ENCODE measurements at regions of chr22 and their contacts with region 1.

Region 1: DNA sequence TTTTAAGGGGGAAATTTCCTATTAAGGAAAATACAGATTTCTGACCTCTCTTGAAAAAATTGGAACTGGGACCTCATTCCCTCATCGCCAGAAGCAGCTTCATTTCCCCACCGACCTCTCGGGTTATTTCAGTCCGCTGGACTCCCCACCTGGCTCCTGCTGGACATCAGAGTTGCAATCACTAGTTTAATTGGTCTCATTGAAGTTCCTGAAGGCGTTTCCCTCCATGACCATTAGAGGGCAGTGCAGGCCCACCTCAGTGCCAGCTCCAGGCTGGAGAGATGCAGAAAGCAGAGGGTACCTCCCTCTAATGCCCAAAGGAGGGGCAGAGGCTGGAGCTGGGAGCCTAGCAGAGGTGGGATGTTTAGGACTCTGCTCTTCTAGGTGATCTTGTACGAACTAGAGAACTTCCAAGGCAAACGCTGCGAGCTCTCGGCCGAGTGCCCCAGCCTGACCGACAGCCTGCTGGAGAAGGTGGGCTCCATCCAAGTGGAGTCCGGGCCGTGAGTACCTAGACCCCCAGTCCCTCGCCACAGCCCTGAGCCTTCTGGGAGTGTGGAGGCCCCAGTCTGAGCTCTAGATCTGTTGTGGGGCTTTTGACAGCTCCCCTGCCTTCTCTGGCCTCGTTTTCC is 2.7 kb downstream of the CRYBB3 start:
- DNase-seq: peak in 4 of 5 donors; percentile 28 to 39 (median 36)
- H3K4me3 ChIP-seq: no peak overlapping the region
- H3K4me3 Mint-ChIP-seq: no peak overlapping the region
- H3K27ac ChIP-seq: no peak overlapping the region
- H3K27ac Mint-ChIP-seq: no peak overlapping the region
- H3K4me1 ChIP-seq: no peaks in the 10 kb centered on the region
- H3K4me1 Mint-ChIP-seq: peaks cover 0 to 3% (median under 1%) of the 10 kb centered on the region in 4 donors
- H3K27me3 ChIP-seq: no peaks in the 10 kb centered on the region
- H3K27me3 Mint-ChIP-seq: no peaks in the 10 kb centered on the region

Region 2: GRCh38 chr22:25027959-25028840 is 174.2 kb before region 1 on chr22:
- CTCF ChIA-PET with region 1: no interaction called
- POLR2A ChIA-PET with region 1: no interaction called
- intact Hi-C with region 1: no loop called
- DNase-seq: no peak
- H3K4me3 ChIP-seq: no peak overlapping the region
- H3K4me3 Mint-ChIP-seq: no peak overlapping the region
- H3K27ac ChIP-seq: no peak overlapping the region
- H3K27ac Mint-ChIP-seq: no peak overlapping the region
- H3K4me1 ChIP-seq: peaks cover 5% of the 10 kb centered on the region
- H3K4me1 Mint-ChIP-seq: peaks cover 7 to 22% (median 9%) of the 10 kb centered on the region in 4 donors
- H3K27me3 ChIP-seq: no peaks in the 10 kb centered on the region
- H3K27me3 Mint-ChIP-seq: no peaks in the 10 kb centered on the region

Region 3: DNA sequence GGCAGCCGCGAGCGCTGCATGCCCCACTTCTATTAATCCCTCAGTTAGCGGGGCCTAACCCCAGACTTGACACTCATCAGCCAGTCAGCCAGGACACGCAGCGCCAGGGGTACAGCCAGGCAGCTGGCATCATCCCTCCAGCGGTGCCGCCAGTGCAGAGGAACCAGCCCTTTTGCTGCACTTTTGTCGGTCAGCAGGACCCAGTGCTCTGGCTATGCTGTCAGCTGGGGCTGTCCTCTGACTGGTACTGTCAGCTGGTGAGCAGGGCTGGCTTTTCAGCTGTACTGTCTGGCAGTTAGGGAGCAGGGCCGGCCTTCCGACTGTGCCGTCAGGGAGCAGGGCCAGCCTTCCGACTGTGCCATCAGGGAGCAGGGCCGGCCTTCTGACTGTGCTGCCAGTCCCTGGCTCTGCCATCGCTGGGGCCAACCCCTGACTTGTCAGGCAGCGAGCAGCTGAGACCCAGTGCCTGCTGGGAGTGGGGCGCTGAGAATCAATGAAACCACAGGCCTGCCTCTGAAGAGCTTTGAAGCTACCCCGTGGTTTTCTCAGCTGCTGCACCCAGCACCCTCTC is 134.5 kb before region 1 on chr22:
- CTCF ChIA-PET with region 1: no interaction called
- POLR2A ChIA-PET with region 1: no interaction called
- intact Hi-C with region 1: loop called (anchors 10 kb)
- DNase-seq: peak; percentile 91 to 95 (median 93)
- H3K4me3 ChIP-seq: no peak overlapping the region
- H3K4me3 Mint-ChIP-seq: peak overlapping the region; percentile 84 to 95 (median 90)
- H3K27ac ChIP-seq: peak overlapping the region; percentile 77
- H3K27ac Mint-ChIP-seq: peak overlapping the region; percentile 95 to 99 (median 97)
- H3K4me1 ChIP-seq: peaks cover 83% of the 10 kb centered on the region
- H3K4me1 Mint-ChIP-seq: peaks cover 57 to 91% (median 77%) of the 10 kb centered on the region in 4 donors
- H3K27me3 ChIP-seq: no peaks in the 10 kb centered on the region
- H3K27me3 Mint-ChIP-seq: no peaks in the 10 kb centered on the region

Region 4: GRCh38 chr22:25134028-25134427 is 68.4 kb before region 1 on chr22:
- CTCF ChIA-PET with region 1: no interaction called
- POLR2A ChIA-PET with region 1: no interaction called
- intact Hi-C with region 1: loop called (anchors 2 kb)
- DNase-seq: no peak
- H3K4me3 ChIP-seq: no peak overlapping the region
- H3K4me3 Mint-ChIP-seq: no peak overlapping the region
- H3K27ac ChIP-seq: no peak overlapping the region
- H3K27ac Mint-ChIP-seq: no peak overlapping the region
- H3K4me1 ChIP-seq: no peaks in the 10 kb centered on the region
- H3K4me1 Mint-ChIP-seq: no peaks in the 10 kb centered on the region
- H3K27me3 ChIP-seq: no peaks in the 10 kb centered on the region
- H3K27me3 Mint-ChIP-seq: no peaks in the 10 kb centered on the region

Region 5: DNA sequence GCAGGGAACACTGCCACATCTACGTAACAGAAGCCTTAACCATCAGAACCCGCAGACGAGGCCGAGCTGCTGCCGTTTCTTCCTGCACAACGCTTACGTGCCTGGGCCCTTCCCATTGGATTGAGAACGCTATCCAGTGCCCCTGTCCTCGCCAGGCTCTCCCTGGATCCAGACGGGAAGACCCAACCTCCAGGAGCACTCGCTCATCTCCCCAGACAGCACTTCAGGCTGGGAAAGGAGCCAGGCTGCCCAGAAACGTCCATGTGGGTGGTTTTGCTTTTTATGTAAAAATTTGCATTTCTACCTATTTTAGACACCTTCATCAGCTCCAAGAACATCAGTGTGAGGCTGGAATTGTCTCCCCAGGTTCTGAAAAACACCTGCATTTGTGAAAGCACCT is 10.0 kb before region 1 on chr22:
- CTCF ChIA-PET with region 1: interaction called, 15 read pairs
- POLR2A ChIA-PET with region 1: no interaction called
- intact Hi-C with region 1: no loop called
- DNase-seq: no peak
- H3K4me3 ChIP-seq: no peak overlapping the region
- H3K4me3 Mint-ChIP-seq: no peak overlapping the region
- H3K27ac ChIP-seq: no peak overlapping the region
- H3K27ac Mint-ChIP-seq: no peak overlapping the region
- H3K4me1 ChIP-seq: no peaks in the 10 kb centered on the region
- H3K4me1 Mint-ChIP-seq: no peaks in the 10 kb centered on the region
- H3K27me3 ChIP-seq: no peaks in the 10 kb centered on the region
- H3K27me3 Mint-ChIP-seq: no peaks in the 10 kb centered on the region

Region 6: DNA sequence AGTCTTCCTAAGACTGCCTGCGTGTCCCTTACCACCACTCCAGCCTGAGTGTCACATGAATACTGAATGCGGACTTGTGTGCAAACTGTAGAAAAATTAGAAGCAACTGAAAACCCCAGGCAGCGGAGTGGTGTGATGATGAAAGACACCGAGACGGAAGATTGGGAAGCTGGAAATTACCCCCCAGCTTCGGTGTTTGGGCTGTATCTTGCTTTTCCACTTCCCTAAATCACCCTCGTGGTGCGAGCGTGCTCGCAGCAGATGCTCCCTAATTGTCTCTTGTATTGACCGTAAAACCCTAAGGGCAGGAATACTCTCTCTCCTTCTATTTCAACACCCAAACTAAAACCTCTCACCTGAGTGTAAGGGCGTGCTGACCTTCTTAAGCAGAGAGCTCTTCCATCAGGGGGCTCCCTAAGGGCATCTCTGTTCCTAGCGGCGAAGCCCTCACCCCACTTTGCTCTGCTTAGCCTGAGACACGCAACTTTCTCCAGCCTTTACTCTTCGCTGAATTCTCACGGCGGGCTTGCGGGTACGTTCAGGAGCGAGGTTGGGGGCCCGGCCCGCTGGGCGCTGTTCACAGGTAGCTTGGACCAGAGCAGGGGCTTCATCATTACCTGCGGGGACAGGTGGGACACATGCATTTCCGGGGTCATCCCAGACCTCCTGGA is 79.4 kb after region 1 on chr22:
- CTCF ChIA-PET with region 1: no interaction called
- POLR2A ChIA-PET with region 1: no interaction called
- intact Hi-C with region 1: no loop called
- DNase-seq: no peak
- H3K4me3 ChIP-seq: no peak overlapping the region
- H3K4me3 Mint-ChIP-seq: peak overlapping the region in 3 of 8 donors; percentile 32 to 51 (median 43)
- H3K27ac ChIP-seq: no peak overlapping the region
- H3K27ac Mint-ChIP-seq: no peak overlapping the region
- H3K4me1 ChIP-seq: no peaks in the 10 kb centered on the region
- H3K4me1 Mint-ChIP-seq: peaks cover 3 to 13% (median 6%) of the 10 kb centered on the region in 4 donors
- H3K27me3 ChIP-seq: peaks cover 4% of the 10 kb centered on the region
- H3K27me3 Mint-ChIP-seq: peaks cover 47 to 50% of the 10 kb centered on the region in 2 donors